Activated T-helper 2 cell treated with anti-CD3 and anti-CD28 coated beads, Interferon-gamma antibody, Interleukin-2, Interleukin-4, amounts not matched to agents 10 μg/mL and 5 μg/mL and 100 μg/mL, durations not matched to agents 14 hours and 24 hours and 36 hours (primary cell): ENCODE measurements at regions of chr2 and their contacts with region 1.

Region 1: GRCh38 chr2:197889041-197889440 is 84.6 kb downstream of the PLCL1 start:
- DNase-seq: no peak
- H3K4me3 Mint-ChIP-seq: no peak overlapping the region
- H3K27ac Mint-ChIP-seq: peak overlapping the region; percentile 77
- H3K4me1 Mint-ChIP-seq: peaks cover 37% of the 10 kb centered on the region
- H3K27me3 Mint-ChIP-seq: no peaks in the 10 kb centered on the region

Region 2: DNA sequence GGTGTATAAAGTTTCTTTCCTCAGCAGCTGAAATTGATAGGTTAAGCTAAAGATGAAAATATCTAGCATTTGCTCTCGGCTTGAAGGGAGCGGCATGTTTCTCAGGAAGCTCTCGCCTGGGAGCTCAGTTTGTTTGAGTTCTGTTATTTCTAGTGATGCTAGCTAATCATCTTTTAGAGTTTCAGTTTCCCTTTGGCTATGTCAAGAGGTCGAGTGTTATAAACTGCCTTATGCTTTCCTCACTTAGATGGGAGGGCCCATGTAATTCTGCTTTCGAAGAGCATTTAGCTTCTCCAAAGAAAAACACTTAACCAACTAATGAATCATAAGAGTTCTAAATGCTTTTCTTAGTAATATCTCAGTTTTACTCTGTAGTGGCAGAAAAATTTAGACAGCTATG is 51.0 kb before region 1 on chr2:
- intact Hi-C with region 1: loop called (anchors 1 kb)
- DNase-seq: no peak
- H3K4me3 Mint-ChIP-seq: peak overlapping the region; percentile 53
- H3K27ac Mint-ChIP-seq: peak overlapping the region; percentile 68
- H3K4me1 Mint-ChIP-seq: peaks cover 44% of the 10 kb centered on the region
- H3K27me3 Mint-ChIP-seq: peaks cover 4% of the 10 kb centered on the region

Region 3: DNA sequence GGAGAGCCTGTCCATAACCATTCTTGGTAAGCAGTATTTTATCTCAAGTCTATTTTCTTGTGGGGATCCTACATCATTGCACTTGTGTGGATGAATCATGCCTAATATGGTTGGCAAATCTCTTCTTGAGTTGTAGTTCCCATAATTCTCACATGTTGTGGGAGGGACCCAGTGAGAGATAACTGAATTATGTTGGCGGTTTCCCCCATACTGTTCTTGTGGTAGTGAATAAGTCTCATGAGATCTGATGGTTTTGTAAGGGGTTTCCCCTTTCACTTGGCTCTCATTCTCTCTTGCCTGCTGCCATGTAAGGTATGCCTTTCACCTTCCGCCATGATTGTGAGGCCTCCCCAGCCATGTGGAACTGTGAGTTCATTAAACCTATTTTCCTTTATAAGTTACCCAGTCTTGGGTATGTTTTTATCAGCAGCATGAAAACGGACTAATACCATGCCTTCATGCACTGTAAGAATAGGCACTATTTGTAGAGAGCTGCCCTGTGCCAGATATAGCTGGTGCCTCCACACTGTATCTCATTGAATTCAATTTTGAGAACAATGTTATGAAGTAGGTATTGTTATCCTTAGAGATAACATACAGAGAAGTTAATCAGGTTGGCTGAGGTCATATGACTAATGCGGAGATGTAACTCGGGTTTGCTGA is 63.6 kb after region 1 on chr2:
- intact Hi-C with region 1: loop called (anchors 2 kb)
- DNase-seq: no peak
- H3K4me3 Mint-ChIP-seq: no peak overlapping the region
- H3K27ac Mint-ChIP-seq: no peak overlapping the region
- H3K4me1 Mint-ChIP-seq: peaks cover 20% of the 10 kb centered on the region
- H3K27me3 Mint-ChIP-seq: peaks cover 7% of the 10 kb centered on the region

Region 4: DNA sequence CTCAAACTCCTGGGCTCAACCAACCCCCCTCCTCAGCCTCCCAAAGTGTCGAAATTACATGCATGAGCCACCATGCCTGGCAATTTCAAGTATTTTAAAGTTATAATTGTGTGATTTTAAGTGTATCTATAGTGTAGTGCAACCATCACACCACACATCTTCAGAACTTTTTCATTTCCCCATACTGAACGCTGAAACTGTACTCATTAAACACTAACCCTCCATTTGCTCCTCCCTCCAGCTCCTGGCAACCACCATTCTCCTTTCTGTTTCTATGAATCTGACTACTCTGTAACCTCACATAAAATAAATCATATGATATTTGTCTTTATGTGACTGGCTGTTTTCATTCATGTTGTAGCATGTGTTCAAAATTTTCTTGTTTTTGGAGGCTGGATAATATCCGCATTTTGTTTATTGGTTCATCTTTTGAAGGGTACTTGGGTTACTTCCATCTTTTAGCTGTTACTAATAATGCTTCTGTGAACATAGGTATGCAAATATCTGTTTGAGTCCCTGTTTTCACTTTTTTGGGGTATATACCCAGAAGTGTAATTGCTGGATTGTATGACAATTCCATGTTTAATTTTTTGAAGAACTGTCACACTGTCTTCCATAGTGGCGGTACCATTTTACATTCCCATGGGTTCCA is 103.6 kb after region 1 on chr2:
- intact Hi-C with region 1: no loop called
- DNase-seq: no peak
- H3K4me3 Mint-ChIP-seq: no peak overlapping the region
- H3K27ac Mint-ChIP-seq: no peak overlapping the region
- H3K4me1 Mint-ChIP-seq: peaks cover 40% of the 10 kb centered on the region
- H3K27me3 Mint-ChIP-seq: no peaks in the 10 kb centered on the region

Region 5: DNA sequence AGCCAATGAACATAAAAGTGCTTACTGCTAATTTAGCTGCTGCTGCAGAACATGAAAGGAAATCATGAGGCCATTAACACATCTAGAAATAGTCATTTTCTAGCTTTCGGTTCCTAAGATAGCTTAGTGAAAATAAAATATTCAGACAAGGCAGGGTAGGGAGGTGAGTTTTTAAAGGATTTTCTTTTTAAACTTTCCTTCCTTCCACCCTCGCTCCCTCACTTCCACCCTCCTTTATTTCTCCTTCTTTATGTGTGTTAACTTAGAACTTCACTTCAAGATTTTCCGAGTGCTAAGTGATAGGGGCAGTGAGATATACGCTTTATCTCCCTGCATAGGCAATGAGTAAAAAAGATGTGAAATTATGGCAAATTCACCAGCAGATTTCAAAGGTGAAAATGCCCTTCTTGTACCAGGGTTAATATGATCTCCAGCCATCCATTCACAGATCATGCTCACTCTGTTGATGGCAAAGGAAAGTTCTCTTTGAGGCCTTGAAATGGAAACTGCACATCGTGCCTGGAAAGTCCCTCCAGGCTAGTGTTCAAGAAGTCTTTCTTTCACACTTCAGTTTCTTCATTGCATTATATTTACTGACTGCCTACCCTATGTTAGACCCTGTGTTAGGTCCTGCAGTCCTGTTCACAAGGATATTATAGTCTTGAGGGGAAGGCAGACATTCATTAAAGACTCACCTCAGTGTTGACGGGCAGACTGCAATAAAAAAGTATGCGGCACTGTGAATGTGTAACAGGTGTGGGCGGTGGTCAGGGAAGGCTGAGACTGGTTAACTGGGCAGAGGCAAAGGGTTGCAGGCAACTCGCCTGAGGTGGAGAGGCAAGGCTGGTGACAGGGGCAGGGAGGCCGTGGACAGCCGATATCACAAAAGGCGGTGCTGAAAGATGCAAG is 116.1 kb after region 1 on chr2:
- intact Hi-C with region 1: loop called (anchors 1 kb)
- DNase-seq: no peak
- H3K4me3 Mint-ChIP-seq: peak overlapping the region; percentile 20
- H3K27ac Mint-ChIP-seq: peak overlapping the region; percentile 79
- H3K4me1 Mint-ChIP-seq: peaks cover 49% of the 10 kb centered on the region
- H3K27me3 Mint-ChIP-seq: no peaks in the 10 kb centered on the region